GM12878 (cell line): ENCODE measurements at regions of chr4 and their contacts with region 1.

Region 1: GRCh38 chr4:39631700-39632079 is 7.0 kb downstream of the SMIM14 start:
- DNase-seq: no peak
- ATAC-seq: peak; percentile 78
- H3K4me3 ChIP-seq: no peak overlapping the region
- H3K27ac ChIP-seq: peak overlapping the region; percentile 59
- H3K4me1 ChIP-seq: peaks cover 26% of the 10 kb centered on the region
- H3K27me3 ChIP-seq: no peaks in the 10 kb centered on the region
- CTCF ChIP-seq: no peak
- EP300 ChIP-seq: peak in 1 of 2 experiments; percentile 70; a peak in 3 of 4 replicates
- POLR2A ChIP-seq: no peak
- RAD21 ChIP-seq: no peak

Region 2: GRCh38 chr4:39568815-39569608 is 62.7 kb before region 1 on chr4:
- CTCF ChIA-PET with region 1: interaction called, 5 read pairs
- POLR2A ChIA-PET with region 1: interaction called, 4 read pairs
- RAD21 ChIA-PET with region 1: interaction called, 7 read pairs
- SMC1A ChIA-PET with region 1: interaction called, 19 read pairs
- in situ Hi-C with region 1: no loop called
- intact Hi-C with region 1: no loop called
- DNase-seq: peak; percentile 31
- ATAC-seq: peak; percentile 88
- H3K4me3 ChIP-seq: peak overlapping the region; percentile 8; the same call in 1 of the 2 replicates
- H3K27ac ChIP-seq: peak overlapping the region; percentile 82
- H3K4me1 ChIP-seq: peaks cover 7% of the 10 kb centered on the region
- H3K27me3 ChIP-seq: no peaks in the 10 kb centered on the region
- CTCF ChIP-seq: no peak
- EP300 ChIP-seq: no peak
- POLR2A ChIP-seq: no peak
- RAD21 ChIP-seq: no peak

Region 3: GRCh38 chr4:39609454-39609931 is 22.2 kb before region 1 on chr4:
- CTCF ChIA-PET with region 1: interaction called, 65 read pairs
- POLR2A ChIA-PET with region 1: interaction called, 129 read pairs
- RAD21 ChIA-PET with region 1: interaction called, 217 read pairs
- SMC1A ChIA-PET with region 1: interaction called, 254 read pairs
- in situ Hi-C with region 1: no loop called
- intact Hi-C with region 1: loop called (anchors 1 kb)
- DNase-seq: peak; percentile 96
- ATAC-seq: peak; percentile 91
- H3K4me3 ChIP-seq: 0 out of 2 replicates have a peak overlapping the region, but pooled peaks have one; percentile 39
- H3K27ac ChIP-seq: peak overlapping the region; percentile 80
- H3K4me1 ChIP-seq: peaks cover 49% of the 10 kb centered on the region
- H3K27me3 ChIP-seq: no peaks in the 10 kb centered on the region
- CTCF ChIP-seq: no peak
- EP300 ChIP-seq: peak; percentile 97 to 100
- POLR2A ChIP-seq: 0 out of 2 replicates have a peak, but pooled peaks have one; percentile 29
- RAD21 ChIP-seq: no peak; the same call in 1 of the 2 replicates

Region 4: GRCh38 chr4:39621582-39621981 is 10.1 kb before region 1 on chr4:
- CTCF ChIA-PET with region 1: interaction called, 65 read pairs
- POLR2A ChIA-PET with region 1: interaction called, 129 read pairs
- RAD21 ChIA-PET with region 1: interaction called, 217 read pairs
- SMC1A ChIA-PET with region 1: interaction called, 254 read pairs
- in situ Hi-C with region 1: no loop called
- intact Hi-C with region 1: no loop called
- DNase-seq: no peak
- ATAC-seq: no peak
- H3K4me3 ChIP-seq: no peak overlapping the region
- H3K27ac ChIP-seq: no peak overlapping the region
- H3K4me1 ChIP-seq: peaks cover 38% of the 10 kb centered on the region
- H3K27me3 ChIP-seq: no peaks in the 10 kb centered on the region
- CTCF ChIP-seq: no peak
- EP300 ChIP-seq: no peak
- POLR2A ChIP-seq: no peak
- RAD21 ChIP-seq: no peak